ENCODE measurements at regions of chr16 and their contacts with region 1.

Region 1: GRCh38 chr16:50665128-50665878 is 15.8 kb downstream of the SNX20 start:
- DNase-seq: peak; percentile 97
- H3K4me3 Mint-ChIP-seq: peak overlapping the region; percentile 71
- H3K27ac Mint-ChIP-seq: peak overlapping the region; percentile 53
- H3K4me1 Mint-ChIP-seq: peaks cover 42% of the 10 kb centered on the region
- H3K27me3 Mint-ChIP-seq: no peaks in the 10 kb centered on the region

Region 2: GRCh38 chr16:50210266-50211038 is 454.9 kb before region 1 on chr16:
- intact Hi-C with region 1: loop called (anchors 1 kb)
- DNase-seq: peak; percentile 90
- H3K4me3 Mint-ChIP-seq: no peak overlapping the region
- H3K27ac Mint-ChIP-seq: peak overlapping the region; percentile 51
- H3K4me1 Mint-ChIP-seq: peaks cover 23% of the 10 kb centered on the region
- H3K27me3 Mint-ChIP-seq: no peaks in the 10 kb centered on the region

Region 3: GRCh38 chr16:50326949-50327402 is 338.3 kb before region 1 on chr16:
- intact Hi-C with region 1: loop called (anchors 2 kb)
- DNase-seq: peak; percentile 92
- H3K4me3 Mint-ChIP-seq: peak overlapping the region; percentile 13
- H3K27ac Mint-ChIP-seq: peak overlapping the region; percentile 61
- H3K4me1 Mint-ChIP-seq: peaks cover 40% of the 10 kb centered on the region
- H3K27me3 Mint-ChIP-seq: no peaks in the 10 kb centered on the region

Region 4: DNA sequence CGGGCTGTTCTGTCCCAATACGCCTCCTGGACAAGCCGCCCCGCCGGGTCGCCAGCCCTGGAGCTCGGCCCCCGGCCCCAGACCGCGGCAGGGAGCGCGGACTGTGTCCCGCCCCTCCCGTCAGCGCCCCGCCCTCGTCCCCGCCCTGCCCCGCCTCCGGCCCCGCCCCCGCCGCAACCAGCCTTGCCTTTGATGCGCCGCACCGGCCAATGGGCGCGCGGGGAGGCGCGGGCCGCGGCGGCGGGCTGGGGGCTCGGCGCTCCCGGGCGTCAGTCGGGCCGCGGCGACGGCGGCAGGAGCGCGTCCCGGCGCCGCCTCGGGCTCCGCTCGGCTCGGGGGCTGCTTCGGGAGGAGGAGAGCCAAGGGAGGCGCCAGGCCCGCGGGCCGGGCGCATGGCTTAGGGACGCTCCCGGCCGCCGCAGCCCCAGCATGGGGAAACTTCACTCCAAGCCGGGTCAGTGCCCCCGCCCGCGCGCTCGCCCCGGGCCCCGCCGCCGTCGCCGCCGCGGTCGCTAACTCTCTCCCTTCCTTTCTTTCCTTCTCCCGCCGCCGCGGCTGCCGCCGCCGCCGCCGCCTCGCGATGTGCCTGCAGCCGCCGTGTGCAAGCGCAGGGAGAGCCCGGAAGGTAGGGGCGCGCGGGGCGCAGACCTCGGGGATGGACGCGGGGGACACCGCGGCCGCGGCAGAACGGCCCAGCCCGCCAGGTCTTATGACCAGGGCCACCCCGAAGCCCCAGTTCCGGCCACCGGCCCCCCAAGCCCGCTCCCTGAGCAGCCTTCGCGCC is 117.0 kb before region 1 on chr16 and contains the start of gene NKD1:
- intact Hi-C with region 1: loop called (anchors 10 kb)
- DNase-seq: peak; percentile 92
- H3K4me3 Mint-ChIP-seq: peak within 1 kb of the TSS; percentile 89
- H3K27ac Mint-ChIP-seq: peak within 1 kb of the TSS; percentile 64
- H3K4me1 Mint-ChIP-seq: peaks cover 8% of the 10 kb centered on the region
- H3K27me3 Mint-ChIP-seq: peaks cover 57% of the 10 kb centered on the region
- total RNA-seq, gene NKD1: 0.77 and 1.7 TPM in 2 replicates

Region 5: DNA sequence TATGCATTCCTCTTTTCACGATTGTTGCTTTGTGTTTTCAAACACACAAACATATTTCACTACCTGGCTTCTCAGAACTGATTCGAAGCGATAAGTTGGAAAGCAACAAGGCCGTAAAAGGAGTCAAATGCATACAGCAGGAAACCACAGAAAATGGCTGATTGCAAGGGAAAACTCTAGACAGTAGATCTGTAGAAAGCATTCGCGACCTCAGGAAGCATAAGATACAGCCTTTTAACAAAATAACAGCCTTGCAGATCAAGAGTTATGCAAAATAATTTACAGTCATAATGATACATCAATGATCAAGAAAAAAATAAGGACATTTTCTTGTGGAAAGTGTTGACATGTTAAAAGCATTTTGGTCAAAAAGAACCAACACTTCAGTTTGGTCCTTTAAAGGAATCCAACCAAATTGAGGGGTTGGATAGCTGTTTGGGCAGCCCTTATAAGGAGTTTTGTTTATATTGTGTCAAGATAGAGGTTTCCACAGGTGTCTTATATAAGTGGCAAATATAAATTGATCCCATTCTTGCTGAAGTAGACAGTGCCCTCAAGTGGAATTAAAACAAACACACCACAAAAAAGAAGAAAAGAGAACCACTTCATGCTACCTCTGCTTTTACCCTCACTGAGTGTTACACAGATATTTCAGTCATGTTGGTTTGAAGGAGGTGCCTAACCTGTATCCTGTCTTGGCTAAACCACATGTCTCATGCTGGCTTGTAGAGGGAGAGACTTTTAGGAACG is 82.1 kb after region 1 on chr16:
- intact Hi-C with region 1: loop called (anchors 1 kb)
- DNase-seq: peak; percentile 86
- H3K4me3 Mint-ChIP-seq: peak overlapping the region; percentile 80
- H3K27ac Mint-ChIP-seq: peak overlapping the region; percentile 90
- H3K4me1 Mint-ChIP-seq: peaks cover 50% of the 10 kb centered on the region
- H3K27me3 Mint-ChIP-seq: no peaks in the 10 kb centered on the region